ENCODE measurements at regions of chr16 and their contacts with region 1.

Region 1: DNA sequence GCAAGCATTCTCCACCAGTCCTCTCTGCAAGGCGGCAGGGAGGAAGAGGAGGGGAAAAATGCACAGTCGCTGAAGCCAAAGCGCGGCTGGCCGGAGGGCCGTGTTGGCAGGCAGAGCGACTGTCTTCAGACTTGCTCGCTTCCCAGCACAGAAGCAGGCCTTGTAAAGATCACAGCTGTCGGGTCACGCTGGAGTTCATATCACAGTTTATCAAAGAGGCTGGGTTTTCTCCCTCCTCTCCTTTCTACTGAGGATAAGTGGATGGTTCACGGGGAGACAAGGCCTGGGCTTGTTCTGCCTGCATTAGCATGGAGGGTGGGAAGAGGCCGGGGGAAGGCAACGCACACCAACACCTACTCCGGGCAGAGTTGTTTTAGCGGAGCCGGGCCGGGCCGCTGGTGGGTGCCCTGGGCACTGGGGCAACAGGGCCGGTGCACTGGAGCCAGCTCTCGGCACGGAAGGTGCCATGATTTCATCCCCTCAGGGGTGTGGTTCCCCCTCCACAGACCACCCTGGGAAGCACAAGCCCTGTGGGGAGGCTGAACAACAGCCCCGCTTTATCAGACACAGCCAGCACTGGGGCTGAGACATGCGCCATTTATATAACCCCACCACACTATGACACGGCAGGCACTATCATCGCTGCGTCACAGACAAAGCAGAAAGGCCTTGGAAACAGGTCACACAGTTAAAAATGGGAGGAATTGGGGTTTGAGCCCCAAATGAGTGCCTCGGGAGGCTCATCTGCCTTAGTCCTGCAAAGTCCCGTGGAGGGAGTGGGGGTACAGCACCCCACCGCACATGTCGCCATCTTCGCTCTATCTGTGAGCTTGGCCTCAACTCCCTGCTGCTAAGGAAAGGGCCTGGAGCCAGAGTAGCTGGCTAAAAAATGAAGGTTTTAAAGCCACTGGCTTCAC is 40.3 kb upstream of the MTSS2 start:
- DNase-seq: peak; percentile 74 to 97 (median 78)

Region 2: GRCh38 chr16:70688246-70689000 is 37.7 kb before region 1 on chr16:
- intact Hi-C with region 1: loop called (anchors 1 kb)
- DNase-seq: peak; percentile 83 to 97 (median 88)